MCF 10A (cell line): ENCODE measurements at regions of chr1 and their contacts with region 1.

Region 1: DNA sequence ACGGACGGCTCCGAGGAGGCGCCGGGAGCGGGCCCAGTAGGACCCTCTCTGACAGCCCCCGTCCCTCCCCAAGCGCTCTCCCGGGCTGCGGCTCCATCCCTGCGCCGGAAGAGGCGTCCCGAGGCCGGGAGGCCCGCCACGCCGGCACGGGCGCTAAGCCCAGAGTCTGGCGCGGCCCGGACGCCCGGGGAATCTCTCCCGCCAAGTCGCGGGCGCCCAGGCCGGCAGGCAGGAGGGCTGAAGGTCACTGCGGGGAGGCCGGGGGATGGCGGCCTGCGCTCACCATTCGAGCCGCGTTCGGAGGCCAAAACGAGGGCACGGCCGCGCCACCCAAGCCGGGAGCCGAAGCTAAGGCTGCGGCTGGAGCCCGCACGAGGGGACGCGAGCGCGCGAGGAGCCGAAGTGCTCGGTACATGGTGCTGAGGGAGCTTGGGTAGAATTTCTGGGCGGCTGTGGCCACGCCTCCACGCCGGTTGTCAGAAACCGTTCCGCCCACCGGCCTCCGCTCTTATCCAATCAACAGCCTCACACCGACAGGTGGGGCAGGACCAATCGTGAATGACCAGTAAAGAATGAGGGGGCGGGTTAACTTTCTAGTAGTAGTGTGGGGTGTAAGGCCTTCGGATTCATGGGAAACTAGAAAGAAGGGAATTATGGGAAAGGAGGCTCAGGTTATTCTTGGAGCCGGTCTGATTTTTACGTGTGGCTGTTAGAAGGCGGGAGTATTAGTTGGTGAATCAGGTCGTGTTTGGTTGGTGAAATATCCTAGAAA is at the start of gene FH:
- DNase-seq: peak; percentile 100
- H3K4me3 Mint-ChIP-seq: no peak within 1 kb of the TSS
- H3K27ac Mint-ChIP-seq: peak within 1 kb of the TSS; percentile 67
- H3K4me1 Mint-ChIP-seq: peaks cover 19% of the 10 kb centered on the region
- H3K27me3 Mint-ChIP-seq: peaks cover 13% of the 10 kb centered on the region
- CTCF ChIP-seq: no peak
- total RNA-seq, gene FH: 136 and 215 TPM in 2 replicates

Region 2: GRCh38 chr1:241406421-241406820 is 113.1 kb before region 1 on chr1:
- CTCF ChIA-PET with region 1: no interaction called
- POLR2A ChIA-PET with region 1: no interaction called
- intact Hi-C with region 1: no loop called
- DNase-seq: no peak
- H3K4me3 Mint-ChIP-seq: no peak overlapping the region
- H3K27ac Mint-ChIP-seq: no peak overlapping the region
- H3K4me1 Mint-ChIP-seq: peaks cover 8% of the 10 kb centered on the region
- H3K27me3 Mint-ChIP-seq: peaks cover 13% of the 10 kb centered on the region
- CTCF ChIP-seq: no peak

Region 3: DNA sequence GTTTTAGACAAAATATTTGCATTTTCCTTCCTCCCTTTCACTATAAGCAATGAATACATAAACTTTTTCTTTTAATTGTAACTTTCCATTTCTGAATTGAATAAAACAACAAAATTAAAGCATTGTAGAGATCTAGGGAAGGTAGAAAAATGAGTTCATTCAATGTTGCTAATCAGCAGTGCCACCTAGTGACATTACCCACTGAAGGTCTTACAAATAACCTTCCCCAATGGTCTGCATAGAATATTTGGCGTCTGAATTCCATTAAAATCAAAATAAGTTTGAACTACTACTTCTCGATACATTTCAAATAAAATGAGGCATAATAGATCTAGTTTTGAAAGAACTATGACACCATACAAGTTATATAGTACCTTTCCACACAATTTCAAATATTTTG is 19.6 kb before region 1 on chr1:
- CTCF ChIA-PET with region 1: interaction called, 10 read pairs
- POLR2A ChIA-PET with region 1: interaction called, 17 read pairs
- intact Hi-C with region 1: no loop called
- DNase-seq: peak; percentile 65
- H3K4me3 Mint-ChIP-seq: no peak overlapping the region
- H3K27ac Mint-ChIP-seq: no peak overlapping the region
- H3K4me1 Mint-ChIP-seq: no peaks in the 10 kb centered on the region
- H3K27me3 Mint-ChIP-seq: no peaks in the 10 kb centered on the region
- CTCF ChIP-seq: peak; percentile 84

Region 4: DNA sequence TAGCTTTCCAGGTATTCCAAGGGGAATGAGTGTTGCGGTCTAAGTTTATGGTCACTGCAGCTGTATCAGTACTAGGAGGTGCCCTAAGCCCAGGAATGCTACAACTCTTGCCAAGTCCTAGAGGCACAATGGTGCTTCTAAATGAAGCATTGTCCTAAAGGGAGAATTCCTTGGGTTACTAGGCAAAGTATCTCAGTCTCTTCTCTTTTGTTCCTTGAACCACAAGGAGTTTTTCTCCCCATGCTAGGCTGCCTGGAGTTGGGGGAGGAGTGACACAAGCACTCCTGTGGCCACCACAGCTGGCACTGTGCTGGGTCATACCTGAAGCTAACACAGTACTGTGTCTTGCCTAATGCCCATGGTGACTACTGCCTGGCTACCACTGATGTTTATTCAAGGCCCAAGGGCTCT is 63.4 kb after region 1 on chr1:
- CTCF ChIA-PET with region 1: no interaction called
- POLR2A ChIA-PET with region 1: interaction called, 11 read pairs
- intact Hi-C with region 1: no loop called
- DNase-seq: peak; percentile 75
- H3K4me3 Mint-ChIP-seq: no peak overlapping the region
- H3K27ac Mint-ChIP-seq: peak overlapping the region; percentile 73
- H3K4me1 Mint-ChIP-seq: peaks cover 8% of the 10 kb centered on the region
- H3K27me3 Mint-ChIP-seq: no peaks in the 10 kb centered on the region
- CTCF ChIP-seq: no peak

Region 5: DNA sequence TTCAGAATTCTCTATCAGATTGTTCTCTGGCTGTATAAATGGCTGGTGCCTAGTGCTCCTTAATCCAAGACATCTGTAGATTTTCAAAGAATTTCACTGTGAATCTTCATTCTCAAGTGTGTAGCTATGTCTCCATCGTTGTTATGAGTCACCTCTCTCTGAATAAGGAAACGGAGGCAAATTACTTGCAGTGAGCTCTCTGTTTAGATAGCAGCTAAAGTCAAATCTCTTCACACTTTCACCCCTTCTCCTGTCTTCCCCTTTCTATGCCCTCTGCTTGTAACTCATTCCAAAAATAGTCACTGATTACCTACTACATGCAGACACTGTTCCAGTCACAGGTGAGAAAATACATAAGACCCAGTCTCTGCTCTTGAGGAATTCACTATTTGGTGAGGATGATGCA is 81.0 kb after region 1 on chr1:
- CTCF ChIA-PET with region 1: no interaction called
- POLR2A ChIA-PET with region 1: interaction called, 42 read pairs
- intact Hi-C with region 1: no loop called
- DNase-seq: peak; percentile 58
- H3K4me3 Mint-ChIP-seq: no peak overlapping the region
- H3K27ac Mint-ChIP-seq: peak overlapping the region; percentile 77
- H3K4me1 Mint-ChIP-seq: peaks cover 52% of the 10 kb centered on the region
- H3K27me3 Mint-ChIP-seq: no peaks in the 10 kb centered on the region
- CTCF ChIP-seq: no peak